SK-N-SH (cell line): ENCODE measurements at regions of chr11 and their contacts with region 1.

Region 1: DNA sequence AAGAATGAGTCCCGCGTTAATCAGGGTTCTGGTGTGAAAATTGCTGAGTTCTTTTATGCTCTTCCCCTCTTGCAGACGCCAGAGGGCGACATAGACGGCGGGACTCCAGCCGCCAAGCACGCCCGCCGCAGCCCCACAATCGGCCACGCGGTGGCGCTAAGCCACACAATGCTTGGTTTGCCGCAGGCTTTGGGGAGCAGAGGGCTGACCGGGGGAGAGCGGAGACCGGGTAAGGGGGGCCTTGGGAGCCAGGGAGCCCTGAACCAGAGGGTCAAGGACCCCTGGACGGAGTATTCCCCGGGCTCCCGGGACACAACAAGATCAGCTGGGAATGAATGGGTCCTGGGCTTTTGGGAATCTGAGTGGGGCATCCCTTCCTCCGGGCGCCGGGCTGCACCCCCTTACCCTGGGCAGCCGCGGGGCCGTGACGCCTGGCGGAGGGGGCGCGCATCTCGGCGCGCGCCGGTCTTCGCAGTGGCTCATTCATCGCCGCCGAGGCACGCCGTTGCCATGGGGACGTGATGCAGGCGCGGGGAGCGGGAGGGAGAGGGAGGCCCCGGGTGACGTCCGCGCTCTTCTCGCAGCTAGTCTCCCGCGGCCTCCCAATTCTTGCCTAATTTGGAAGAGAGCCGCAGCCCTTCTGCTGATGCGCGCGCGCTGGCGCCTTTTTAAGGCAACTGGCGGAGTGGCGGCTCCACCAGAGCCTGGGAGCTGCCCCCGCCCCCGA is 12.2 kb upstream of the NPAS4 start:
- DNase-seq: peak; percentile 95
- H3K4me3 ChIP-seq: peak overlapping the region; percentile 47 to 68
- H3K27ac ChIP-seq: no peak overlapping the region
- H3K4me1 ChIP-seq: peaks cover 0 to 3% of the 10 kb centered on the region in 2 experiments; a peak in 1 of 4 replicates
- H3K27me3 ChIP-seq: peaks cover 45% of the 10 kb centered on the region
- CTCF ChIP-seq: peak; percentile 100
- EP300 ChIP-seq: no peak
- RAD21 ChIP-seq: peak; percentile 96

Region 2: GRCh38 chr11:66421492-66422205 is 13.0 kb after region 1 on chr11:
- CTCF ChIA-PET with region 1: interaction called, 617 read pairs
- POLR2A ChIA-PET with region 1: interaction called, 4 read pairs
- DNase-seq: peak; percentile 82
- H3K4me3 ChIP-seq: peak overlapping the region in 1 of 2 experiments; percentile 36; a peak in 1 of 4 replicates
- H3K27ac ChIP-seq: no peak overlapping the region
- H3K4me1 ChIP-seq: peaks cover 4 to 14% of the 10 kb centered on the region in 2 experiments; a peak in 2 of 4 replicates
- H3K27me3 ChIP-seq: peaks cover 24% of the 10 kb centered on the region
- CTCF ChIP-seq: no peak
- EP300 ChIP-seq: no peak
- RAD21 ChIP-seq: no peak

Region 3: GRCh38 chr11:66438504-66439466 is 30.1 kb after region 1 on chr11 and contains the start of gene MRPL11:
- CTCF ChIA-PET with region 1: interaction called, 617 read pairs
- POLR2A ChIA-PET with region 1: no interaction called
- DNase-seq: peak; percentile 98
- H3K4me3 ChIP-seq: peak within 1 kb of the TSS; percentile 78 to 87
- H3K27ac ChIP-seq: peak within 1 kb of the TSS; percentile 63 to 91
- H3K4me1 ChIP-seq: peaks cover 0 to 5% of the 10 kb centered on the region in 2 experiments; a peak in 1 of 4 replicates
- H3K27me3 ChIP-seq: peaks cover 20% of the 10 kb centered on the region; the same call in 1 of the 2 replicates
- CTCF ChIP-seq: peak; percentile 74
- EP300 ChIP-seq: no peak
- RAD21 ChIP-seq: peak; percentile 55
- polyA plus RNA-seq, gene MRPL11: 33.9 and 45.6 TPM in 2 replicates

Region 4: GRCh38 chr11:66466225-66467027 is 57.8 kb after region 1 on chr11 and contains the start of gene PELI3:
- CTCF ChIA-PET with region 1: interaction called, 20 read pairs
- POLR2A ChIA-PET with region 1: no interaction called
- DNase-seq: peak; percentile 98
- H3K4me3 ChIP-seq: peak within 1 kb of the TSS; percentile 76
- H3K27ac ChIP-seq: peak within 1 kb of the TSS; percentile 46 to 78; a peak in 3 of 4 replicates
- H3K4me1 ChIP-seq: peaks cover 5 to 18% of the 10 kb centered on the region in 2 experiments; a peak in 3 of 4 replicates
- H3K27me3 ChIP-seq: no peaks in the 10 kb centered on the region
- CTCF ChIP-seq: no peak
- EP300 ChIP-seq: no peak
- RAD21 ChIP-seq: no peak
- polyA plus RNA-seq, gene PELI3: 6.5 and 7.0 TPM in 2 replicates

Region 5: GRCh38 chr11:66480117-66480938 is 71.7 kb after region 1 on chr11 and contains the start of gene DPP3:
- CTCF ChIA-PET with region 1: interaction called, 26 read pairs
- POLR2A ChIA-PET with region 1: no interaction called
- DNase-seq: peak; percentile 99
- H3K4me3 ChIP-seq: peak within 1 kb of the TSS; percentile 64 to 82
- H3K27ac ChIP-seq: peak within 1 kb of the TSS; percentile 85 to 93
- H3K4me1 ChIP-seq: peaks cover 0 to 15% of the 10 kb centered on the region in 2 experiments; a peak in 2 of 4 replicates
- H3K27me3 ChIP-seq: no peaks in the 10 kb centered on the region
- CTCF ChIP-seq: no peak
- EP300 ChIP-seq: no peak
- RAD21 ChIP-seq: no peak
- polyA plus RNA-seq, gene DPP3: 62.1 and 70.6 TPM in 2 replicates